ENCODE measurements at regions of chr3 and their contacts with region 1.

Region 1: DNA sequence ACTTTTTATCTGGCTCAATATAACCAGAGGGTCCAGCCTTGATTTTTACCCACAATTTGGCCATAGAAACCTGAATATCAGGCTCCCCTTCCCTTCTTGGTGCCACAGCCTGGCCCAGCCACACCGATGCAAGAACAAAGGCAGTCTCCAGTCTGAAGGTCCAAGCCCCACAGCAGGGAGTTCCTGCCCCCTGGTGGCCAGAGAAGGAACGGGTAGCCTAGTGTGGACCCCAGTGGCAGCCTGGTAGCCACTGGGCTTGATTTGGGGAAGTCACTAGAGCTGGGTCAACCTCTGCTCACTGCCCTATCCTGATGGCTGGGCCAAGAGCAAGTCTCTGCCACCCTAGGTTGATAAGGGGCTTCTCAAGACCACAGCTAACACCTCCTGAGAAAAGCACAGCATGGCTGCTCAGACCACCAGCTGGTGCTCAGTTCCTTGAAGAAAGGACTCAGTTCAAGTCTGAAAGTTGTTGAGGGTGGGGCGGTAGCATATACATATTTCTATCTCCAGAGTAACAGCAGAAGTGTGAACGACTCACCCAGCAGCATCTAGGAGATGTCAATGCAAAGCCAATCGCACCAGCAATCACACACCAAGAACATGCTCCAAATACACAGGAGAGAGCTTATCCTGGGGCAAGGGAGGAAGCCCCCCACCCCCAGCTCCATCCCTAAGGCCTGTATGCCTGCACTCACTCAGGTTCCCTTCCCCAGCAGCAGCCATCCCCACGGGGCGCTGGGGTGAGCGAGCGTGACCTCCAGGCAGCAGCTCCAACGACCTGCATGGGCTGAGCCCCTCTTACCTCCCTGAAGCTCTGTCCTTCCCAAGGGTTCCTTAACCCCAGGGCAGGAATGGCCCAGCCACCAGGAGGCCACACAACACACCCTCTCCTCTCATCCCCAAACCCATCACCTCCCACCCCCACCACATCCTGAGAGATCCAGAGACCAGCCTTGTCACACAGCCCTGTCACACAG is 7.6 kb downstream of the PFKFB4 start:
- DNase-seq: peak; percentile 91 to 94 (median 91)
- H3K4me3 ChIP-seq: no peak overlapping the region
- H3K4me3 Mint-ChIP-seq: no peak overlapping the region
- H3K27ac ChIP-seq: peak overlapping the region; percentile 31 to 49
- H3K27ac Mint-ChIP-seq: peak overlapping the region; percentile 60 to 92 (median 82)
- H3K4me1 ChIP-seq: peaks cover 55 to 75% of the 10 kb centered on the region in 2 donors
- H3K4me1 Mint-ChIP-seq: peaks cover 71% of the 10 kb centered on the region
- H3K27me3 ChIP-seq: no peaks in the 10 kb centered on the region
- H3K27me3 Mint-ChIP-seq: peaks cover 0 to 2% (median 1%) of the 10 kb centered on the region in 3 donors
- CTCF ChIP-seq: peak; percentile 87

Region 2: GRCh38 chr3:48273594-48274211 is 275.3 kb before region 1 on chr3:
- intact Hi-C with region 1: loop called in 1 of 2 experiments (anchors 10 kb)
- DNase-seq: peak; percentile 45 to 67 (median 62)
- H3K4me3 ChIP-seq: no peak overlapping the region
- H3K4me3 Mint-ChIP-seq: no peak overlapping the region
- H3K27ac ChIP-seq: no peak overlapping the region
- H3K27ac Mint-ChIP-seq: no peak overlapping the region
- H3K4me1 ChIP-seq: no peaks in the 10 kb centered on the region
- H3K4me1 Mint-ChIP-seq: peaks cover 11% of the 10 kb centered on the region
- H3K27me3 ChIP-seq: no peaks in the 10 kb centered on the region
- H3K27me3 Mint-ChIP-seq: peaks cover 0 to 4% (median 1%) of the 10 kb centered on the region in 3 donors
- CTCF ChIP-seq: peak; percentile 82

Region 3: GRCh38 chr3:48465531-48466378 is 83.3 kb before region 1 on chr3:
- intact Hi-C with region 1: loop called (anchors 2 to 5 kb)
- DNase-seq: peak; percentile 100
- H3K4me3 ChIP-seq: peak overlapping the region; percentile 55 to 91 (median 74)
- H3K4me3 Mint-ChIP-seq: peak overlapping the region; percentile 86 to 94
- H3K27ac ChIP-seq: peak overlapping the region; percentile 97 to 100
- H3K27ac Mint-ChIP-seq: peak overlapping the region; percentile 100
- H3K4me1 ChIP-seq: peaks cover 51% of the 10 kb centered on the region in 2 donors
- H3K4me1 Mint-ChIP-seq: peaks cover 47% of the 10 kb centered on the region
- H3K27me3 ChIP-seq: no peaks in the 10 kb centered on the region
- H3K27me3 Mint-ChIP-seq: peaks cover 0 to 2% (median 0%) of the 10 kb centered on the region in 3 donors
- CTCF ChIP-seq: no peak